Mammary epithelial cell (primary cell): ENCODE measurements at regions of chr11 and their contacts with region 1.

Region 1: GRCh38 chr11:131674051-131674755 is 303.8 kb downstream of the NTM start:
- DNase-seq: peak; percentile 72
- H3K4me3 ChIP-seq: no peak overlapping the region
- H3K27ac ChIP-seq: no peak overlapping the region
- H3K4me1 ChIP-seq: peaks cover 5% of the 10 kb centered on the region
- H3K27me3 ChIP-seq: no peaks in the 10 kb centered on the region
- CTCF ChIP-seq: peak; percentile 98

Region 2: GRCh38 chr11:130918081-130918480 is 756.1 kb before region 1 on chr11:
- CTCF ChIA-PET with region 1: interaction called, 5 read pairs
- dilution Hi-C with region 1: no loop called
- in situ Hi-C with region 1: no loop called
- intact Hi-C with region 1: loop called (anchors 1 kb)
- DNase-seq: no peak
- H3K4me3 ChIP-seq: no peak overlapping the region
- H3K27ac ChIP-seq: no peak overlapping the region
- H3K4me1 ChIP-seq: peaks cover 13% of the 10 kb centered on the region
- H3K27me3 ChIP-seq: peaks cover 2% of the 10 kb centered on the region
- CTCF ChIP-seq: no peak

Region 3: DNA sequence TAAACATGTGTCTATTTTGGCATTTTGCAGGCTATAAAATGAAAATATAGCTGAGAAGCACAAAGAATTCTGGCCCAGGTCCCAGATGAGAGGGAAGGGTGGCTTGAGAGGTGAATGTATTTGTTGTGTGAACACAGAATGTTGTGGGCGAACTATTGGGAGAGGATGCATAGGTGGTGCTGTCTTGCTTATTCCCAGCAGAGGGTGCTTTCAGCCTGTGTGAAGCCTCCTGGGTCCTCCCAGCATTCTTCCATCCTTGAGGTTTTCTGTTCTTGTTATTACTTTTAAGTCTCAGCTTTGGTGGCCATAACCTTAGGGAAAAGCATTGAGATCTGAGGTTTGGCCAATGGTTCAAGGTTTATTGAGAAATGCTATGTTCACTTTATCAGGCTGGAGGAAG is 649.2 kb before region 1 on chr11:
- CTCF ChIA-PET with region 1: interaction called, 5 read pairs
- dilution Hi-C with region 1: no loop called
- in situ Hi-C with region 1: no loop called
- intact Hi-C with region 1: loop called (anchors 1 kb)
- DNase-seq: peak; percentile 49
- H3K4me3 ChIP-seq: no peak overlapping the region
- H3K27ac ChIP-seq: no peak overlapping the region
- H3K4me1 ChIP-seq: peaks cover 3% of the 10 kb centered on the region
- H3K27me3 ChIP-seq: no peaks in the 10 kb centered on the region
- CTCF ChIP-seq: peak; percentile 84 to 88

Region 4: DNA sequence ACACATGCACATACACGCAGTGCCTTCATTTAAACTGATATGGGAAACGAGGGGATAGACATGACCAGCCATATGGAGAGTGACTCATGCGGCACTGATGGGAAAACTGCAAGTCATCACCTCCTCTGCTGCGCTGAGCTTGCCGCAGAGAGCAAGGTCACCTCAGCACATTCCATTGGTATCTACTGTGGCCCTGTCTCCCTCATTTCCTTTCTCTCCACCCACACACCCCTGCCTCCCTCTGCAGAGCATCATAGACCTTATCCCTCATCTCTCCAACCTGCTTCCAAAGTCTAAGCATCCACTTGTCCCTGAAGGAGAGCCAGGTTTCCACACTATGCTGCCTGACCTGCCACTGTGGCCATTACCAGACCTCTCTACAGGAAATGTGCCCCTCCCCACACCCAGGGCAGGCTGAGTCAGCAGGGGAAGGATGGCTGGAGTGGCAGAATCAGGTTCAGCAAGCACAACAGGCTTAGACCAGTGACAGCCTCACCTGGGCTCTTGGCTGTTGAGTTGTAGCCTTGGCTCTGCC is 641.0 kb before region 1 on chr11:
- CTCF ChIA-PET with region 1: interaction called, 5 read pairs
- dilution Hi-C with region 1: no loop called
- in situ Hi-C with region 1: no loop called
- intact Hi-C with region 1: loop called (anchors 2 kb)
- DNase-seq: peak; percentile 87
- H3K4me3 ChIP-seq: no peak overlapping the region
- H3K27ac ChIP-seq: peak overlapping the region; percentile 42
- H3K4me1 ChIP-seq: peaks cover 21% of the 10 kb centered on the region
- H3K27me3 ChIP-seq: no peaks in the 10 kb centered on the region
- CTCF ChIP-seq: no peak

Region 5: DNA sequence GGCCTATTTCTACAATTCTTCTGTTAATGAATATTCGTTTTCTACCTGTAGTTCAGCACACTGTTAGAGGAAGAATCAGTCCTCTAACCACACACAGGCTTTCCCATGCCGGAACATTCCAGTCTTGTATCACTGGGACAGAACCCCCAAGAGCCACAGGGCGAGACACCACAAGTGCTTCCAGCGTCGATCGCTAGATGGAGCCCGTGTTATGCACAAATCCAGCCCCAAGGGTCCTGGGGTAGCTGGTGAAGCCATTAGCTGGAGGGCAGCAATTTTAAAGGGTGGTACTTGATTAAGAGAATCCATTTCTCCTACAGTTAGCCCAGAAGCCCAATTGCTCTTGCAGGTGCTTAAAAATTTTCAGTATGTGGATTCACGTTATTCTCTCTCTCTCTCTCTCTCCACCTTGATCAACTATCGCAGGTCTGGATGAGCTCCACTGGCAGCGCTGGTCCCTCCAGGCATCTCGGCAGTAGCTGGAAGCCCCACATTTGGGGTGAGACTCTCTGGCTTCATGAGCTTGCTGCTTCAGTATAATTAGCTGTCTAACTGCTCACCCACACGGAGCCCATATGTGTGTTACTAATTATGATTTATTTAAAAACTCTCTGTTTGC is 609.7 kb before region 1 on chr11:
- CTCF ChIA-PET with region 1: interaction called, 11 read pairs
- dilution Hi-C with region 1: no loop called
- in situ Hi-C with region 1: loop called (anchors 10 kb)
- intact Hi-C with region 1: loop called (anchors 1 kb)
- DNase-seq: peak; percentile 43
- H3K4me3 ChIP-seq: no peak overlapping the region
- H3K27ac ChIP-seq: no peak overlapping the region
- H3K4me1 ChIP-seq: no peaks in the 10 kb centered on the region
- H3K27me3 ChIP-seq: no peaks in the 10 kb centered on the region
- CTCF ChIP-seq: peak; percentile 97

Region 6: DNA sequence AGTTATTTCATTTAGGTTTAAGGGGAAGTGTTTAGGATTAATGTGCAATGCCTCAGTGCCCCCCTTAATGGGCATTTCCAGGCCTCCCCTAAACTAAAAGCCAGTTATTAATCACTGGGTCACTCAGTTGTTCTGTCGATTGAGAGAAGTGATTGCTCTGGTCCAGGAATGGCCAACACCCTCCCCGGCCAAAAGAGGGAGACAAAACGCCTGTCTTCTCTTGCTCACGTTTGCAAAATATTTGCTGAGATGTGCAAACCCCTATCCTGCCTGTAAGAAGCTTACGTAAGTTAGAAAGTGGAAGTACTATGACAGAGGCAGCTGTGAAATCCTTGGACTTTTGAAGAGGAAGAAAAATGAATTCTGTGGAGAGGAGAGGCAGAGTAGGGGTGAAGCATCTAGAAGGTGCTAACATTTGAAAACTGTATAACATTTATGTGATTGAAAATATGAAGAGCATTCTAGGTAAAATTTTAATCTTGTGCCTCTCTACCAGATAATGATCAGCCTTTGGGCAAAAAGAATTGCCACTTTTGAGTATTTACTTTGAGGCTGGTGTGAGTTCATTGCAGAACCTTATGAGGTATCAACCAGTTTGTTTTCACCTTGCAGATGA is 266.1 kb before region 1 on chr11:
- CTCF ChIA-PET with region 1: no interaction called
- dilution Hi-C with region 1: no loop called
- in situ Hi-C with region 1: no loop called
- intact Hi-C with region 1: loop called (anchors 5 kb)
- DNase-seq: peak; percentile 6
- H3K4me3 ChIP-seq: no peak overlapping the region
- H3K27ac ChIP-seq: no peak overlapping the region
- H3K4me1 ChIP-seq: no peaks in the 10 kb centered on the region
- H3K27me3 ChIP-seq: no peaks in the 10 kb centered on the region
- CTCF ChIP-seq: peak; percentile 51 to 66

Region 7: GRCh38 chr11:131579932-131580387 is 94.2 kb before region 1 on chr11:
- CTCF ChIA-PET with region 1: interaction called, 4 read pairs
- dilution Hi-C with region 1: no loop called
- in situ Hi-C with region 1: no loop called
- intact Hi-C with region 1: loop called (anchors 2 kb)
- DNase-seq: peak; percentile 1
- H3K4me3 ChIP-seq: no peak overlapping the region
- H3K27ac ChIP-seq: no peak overlapping the region
- H3K4me1 ChIP-seq: no peaks in the 10 kb centered on the region
- H3K27me3 ChIP-seq: no peaks in the 10 kb centered on the region
- CTCF ChIP-seq: peak; percentile 39 to 56